Caco-2 (cell line): ENCODE measurements at regions of chr10 and their contacts with region 1.

Region 1: GRCh38 chr10:30519639-30520038 is 85.7 kb downstream of the MAP3K8 start:
- DNase-seq: no peak
- H3K4me3 ChIP-seq: no peak overlapping the region
- H3K4me3 Mint-ChIP-seq: no peak overlapping the region
- H3K27ac Mint-ChIP-seq: no peak overlapping the region
- H3K4me1 ChIP-seq: peaks cover 24% of the 10 kb centered on the region
- H3K4me1 Mint-ChIP-seq: peaks cover 18% of the 10 kb centered on the region
- H3K27me3 ChIP-seq: no peaks in the 10 kb centered on the region
- H3K27me3 Mint-ChIP-seq: no peaks in the 10 kb centered on the region
- CTCF ChIP-seq: no peak

Region 2: GRCh38 chr10:30422981-30423654 is 96.5 kb before region 1 on chr10:
- CTCF ChIA-PET with region 1: no interaction called
- POLR2A ChIA-PET with region 1: no interaction called
- intact Hi-C with region 1: loop called (anchors 1 kb)
- DNase-seq: peak; percentile 94 to 95
- H3K4me3 ChIP-seq: no peak overlapping the region
- H3K4me3 Mint-ChIP-seq: peak overlapping the region; percentile 66
- H3K27ac Mint-ChIP-seq: peak overlapping the region; percentile 99
- H3K4me1 ChIP-seq: peaks cover 52% of the 10 kb centered on the region
- H3K4me1 Mint-ChIP-seq: peaks cover 45% of the 10 kb centered on the region
- H3K27me3 ChIP-seq: no peaks in the 10 kb centered on the region
- H3K27me3 Mint-ChIP-seq: no peaks in the 10 kb centered on the region
- CTCF ChIP-seq: no peak

Region 3: GRCh38 chr10:30433730-30434272 is 85.8 kb before region 1 on chr10 and contains the start of gene MAP3K8:
- CTCF ChIA-PET with region 1: no interaction called
- POLR2A ChIA-PET with region 1: interaction called, 4 read pairs
- intact Hi-C with region 1: loop called (anchors 1 kb)
- DNase-seq: peak; percentile 95 to 96
- H3K4me3 ChIP-seq: peak within 1 kb of the TSS; percentile 91
- H3K4me3 Mint-ChIP-seq: peak within 1 kb of the TSS; percentile 92
- H3K27ac Mint-ChIP-seq: peak within 1 kb of the TSS; percentile 97
- H3K4me1 ChIP-seq: peaks cover 47% of the 10 kb centered on the region
- H3K4me1 Mint-ChIP-seq: peaks cover 56% of the 10 kb centered on the region
- H3K27me3 ChIP-seq: no peaks in the 10 kb centered on the region
- H3K27me3 Mint-ChIP-seq: no peaks in the 10 kb centered on the region
- CTCF ChIP-seq: peak in 1 of 2 experiments; percentile 1
- total RNA-seq, gene MAP3K8: 17.9 and 18.8 TPM in 2 replicates

Region 4: GRCh38 chr10:30493609-30494530 is 25.8 kb before region 1 on chr10:
- CTCF ChIA-PET with region 1: no interaction called
- POLR2A ChIA-PET with region 1: no interaction called
- intact Hi-C with region 1: no loop called
- DNase-seq: no peak
- H3K4me3 ChIP-seq: no peak overlapping the region
- H3K4me3 Mint-ChIP-seq: no peak overlapping the region
- H3K27ac Mint-ChIP-seq: no peak overlapping the region
- H3K4me1 ChIP-seq: no peaks in the 10 kb centered on the region
- H3K4me1 Mint-ChIP-seq: peaks cover 21% of the 10 kb centered on the region
- H3K27me3 ChIP-seq: no peaks in the 10 kb centered on the region
- H3K27me3 Mint-ChIP-seq: no peaks in the 10 kb centered on the region
- CTCF ChIP-seq: peak; percentile 29 to 33